Left lung (tissue), 14 donors: ENCODE measurements at regions of chr7 and their contacts with region 1.

Region 1: DNA sequence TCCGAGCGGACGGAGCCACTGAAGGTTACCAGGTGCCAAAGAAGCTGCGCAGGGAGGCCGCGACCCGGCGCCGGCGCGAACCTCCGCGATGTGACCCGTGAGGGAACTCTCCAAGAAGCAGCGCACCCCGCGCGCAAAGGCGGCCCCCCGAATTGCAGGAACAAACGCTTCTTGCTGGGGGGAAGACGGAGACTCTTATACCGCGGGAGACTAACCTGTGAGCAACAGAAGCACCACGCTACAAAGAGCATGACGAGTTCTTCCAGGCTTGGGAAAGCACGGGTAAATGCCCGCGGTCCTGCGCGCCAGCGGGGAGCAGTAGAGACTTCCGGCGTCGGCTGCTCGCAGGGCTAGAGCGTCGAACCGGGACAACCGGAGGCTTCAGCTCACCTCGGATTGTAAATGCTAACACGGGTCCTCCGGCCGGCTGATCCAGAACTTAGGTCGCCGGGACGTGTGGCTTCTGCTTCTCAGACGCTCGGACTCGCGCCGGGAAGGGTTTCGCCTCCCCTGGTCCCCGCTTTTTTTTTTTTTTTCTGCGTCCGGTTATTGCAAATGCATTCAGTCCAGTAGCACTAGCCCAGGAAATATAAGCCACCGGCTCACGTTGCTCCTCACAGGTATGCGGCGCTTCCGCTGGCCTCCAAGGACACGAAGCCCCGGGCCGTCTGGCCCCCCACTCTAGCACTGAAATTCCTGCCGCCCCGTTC is at the start of gene COA1:
- DNase-seq: peak; percentile 88 to 95 (median 90)
- ATAC-seq: peak; percentile 100
- H3K4me3 ChIP-seq: peak within 1 kb of the TSS; percentile 49 to 70
- H3K27ac ChIP-seq: peak within 1 kb of the TSS; percentile 76 to 85
- H3K4me1 ChIP-seq: peaks cover 7 to 28% of the 10 kb centered on the region in 2 donors
- H3K27me3 ChIP-seq: no peaks in the 10 kb centered on the region
- CTCF ChIP-seq: no peak
- polyA plus RNA-seq, gene COA1: 71.4 to 89.2 (median 79.7) TPM

Region 2: GRCh38 chr7:43834463-43835251 is 105.3 kb after region 1 on chr7:
- intact Hi-C with region 1: loop called in 1 of 2 experiments (anchors 10 kb)
- DNase-seq: no peak
- ATAC-seq: peak; percentile 15
- H3K4me3 ChIP-seq: peak overlapping the region in 1 of 2 donors; percentile 18
- H3K27ac ChIP-seq: peak overlapping the region in 1 of 2 donors; percentile 31
- H3K4me1 ChIP-seq: peaks cover 0 to 10% of the 10 kb centered on the region in 2 donors
- H3K27me3 ChIP-seq: no peaks in the 10 kb centered on the region
- CTCF ChIP-seq: no peak